Natural killer cell (primary cell): ENCODE measurements at regions of chr9 and their contacts with region 1.

Region 1: DNA sequence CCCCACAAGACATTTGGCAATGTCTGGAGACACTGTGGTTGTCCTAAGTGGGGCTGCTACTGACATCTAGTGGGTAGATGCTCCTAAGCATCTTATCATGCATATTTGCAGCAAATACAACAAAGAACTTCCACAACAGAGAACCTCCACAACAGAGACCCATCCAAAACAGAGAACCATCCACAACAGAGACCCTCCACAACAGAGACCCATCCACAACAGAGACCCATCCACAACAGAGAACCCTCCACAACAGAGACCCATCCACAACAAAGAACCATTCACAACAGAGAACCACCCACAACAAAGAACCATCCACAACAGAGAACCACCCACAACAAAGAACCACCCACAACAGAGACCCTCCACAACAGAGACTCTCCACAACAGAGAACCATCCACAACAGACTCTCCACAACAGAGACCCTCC is 32.8 kb downstream of the ARPC5L start:
- DNase-seq: peak in 1 of 2 donors; percentile 78
- ATAC-seq: peak; percentile 82 to 99 (median 96)
- H3K4me3 ChIP-seq: no peak overlapping the region
- H3K4me3 Mint-ChIP-seq: no peak overlapping the region
- H3K27ac ChIP-seq: no peak overlapping the region
- H3K27ac Mint-ChIP-seq: peak overlapping the region in 1 of 2 donors; percentile 74
- H3K4me1 ChIP-seq: peaks cover 4% of the 10 kb centered on the region
- H3K4me1 Mint-ChIP-seq: peaks cover 8 to 16% of the 10 kb centered on the region in 2 donors
- H3K27me3 ChIP-seq: no peaks in the 10 kb centered on the region
- H3K27me3 Mint-ChIP-seq: no peaks in the 10 kb centered on the region
- CTCF ChIP-seq: peak; percentile 65

Region 2: GRCh38 chr9:124291801-124292396 is 602.9 kb before region 1 on chr9:
- intact Hi-C with region 1: no loop called
- DNase-seq: peak in 1 of 2 donors; percentile 40
- ATAC-seq: peak; percentile 45 to 58 (median 57)
- H3K4me3 ChIP-seq: no peak overlapping the region
- H3K4me3 Mint-ChIP-seq: no peak overlapping the region
- H3K27ac ChIP-seq: no peak overlapping the region
- H3K27ac Mint-ChIP-seq: peak overlapping the region; percentile 34 to 70
- H3K4me1 ChIP-seq: peaks cover 83% of the 10 kb centered on the region
- H3K4me1 Mint-ChIP-seq: peaks cover 47 to 58% of the 10 kb centered on the region in 2 donors
- H3K27me3 ChIP-seq: no peaks in the 10 kb centered on the region
- H3K27me3 Mint-ChIP-seq: no peaks in the 10 kb centered on the region
- CTCF ChIP-seq: no peak

Region 3: GRCh38 chr9:124839612-124840299 is 55.0 kb before region 1 on chr9:
- intact Hi-C with region 1: loop called (anchors 10 kb)
- DNase-seq: no peak
- ATAC-seq: no peak
- H3K4me3 ChIP-seq: no peak overlapping the region
- H3K4me3 Mint-ChIP-seq: no peak overlapping the region
- H3K27ac ChIP-seq: no peak overlapping the region
- H3K27ac Mint-ChIP-seq: no peak overlapping the region
- H3K4me1 ChIP-seq: no peaks in the 10 kb centered on the region
- H3K4me1 Mint-ChIP-seq: no peaks in the 10 kb centered on the region
- H3K27me3 ChIP-seq: peaks cover 2% of the 10 kb centered on the region
- H3K27me3 Mint-ChIP-seq: peaks cover 8 to 12% of the 10 kb centered on the region in 2 donors
- CTCF ChIP-seq: peak; percentile 5

Region 4: DNA sequence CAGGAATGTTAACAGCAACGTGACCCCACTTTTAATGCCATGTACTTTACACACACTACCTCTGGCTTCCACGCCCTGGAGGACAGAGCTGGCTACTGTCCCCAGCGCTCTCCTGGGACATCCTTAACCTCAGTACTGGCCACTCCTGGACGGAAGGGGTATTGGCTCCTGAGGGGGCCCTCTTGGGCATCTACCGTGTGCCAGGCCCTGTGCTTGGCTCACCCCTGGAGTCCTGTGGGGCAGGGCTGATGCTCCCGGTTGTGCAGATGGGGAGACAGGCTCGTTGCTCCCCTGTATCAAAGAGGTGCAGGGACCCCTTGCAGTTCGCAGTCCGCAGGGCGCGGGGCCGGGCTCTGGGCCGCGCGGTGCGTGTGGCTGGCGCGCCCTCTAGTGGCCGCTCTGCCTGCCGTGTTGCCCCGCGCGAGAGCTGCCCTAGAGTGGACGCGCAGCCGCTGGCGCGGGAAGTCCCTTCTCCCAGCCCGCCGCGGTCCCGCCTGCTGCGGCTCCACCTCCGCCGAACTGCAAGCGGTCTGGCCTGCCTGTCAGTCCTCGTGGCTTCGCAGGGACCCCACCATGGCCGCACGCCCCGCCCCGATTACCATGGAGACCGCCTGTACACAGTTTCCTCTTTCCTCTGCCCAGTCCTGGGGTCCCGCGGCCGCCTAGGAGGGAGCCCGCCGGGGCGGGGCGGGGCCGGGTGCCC is 41.8 kb before region 1 on chr9 and contains the start of gene WDR38:
- intact Hi-C with region 1: loop called (anchors 1 kb)
- DNase-seq: peak; percentile 88 to 93
- ATAC-seq: peak; percentile 90 to 96 (median 95)
- H3K4me3 ChIP-seq: peak within 1 kb of the TSS; percentile 27
- H3K4me3 Mint-ChIP-seq: peak within 1 kb of the TSS; percentile 82
- H3K27ac ChIP-seq: peak within 1 kb of the TSS; percentile 87
- H3K27ac Mint-ChIP-seq: peak within 1 kb of the TSS; percentile 86 to 89
- H3K4me1 ChIP-seq: peaks cover 23% of the 10 kb centered on the region
- H3K4me1 Mint-ChIP-seq: peaks cover 13 to 24% of the 10 kb centered on the region in 2 donors
- H3K27me3 ChIP-seq: peaks cover 3% of the 10 kb centered on the region
- H3K27me3 Mint-ChIP-seq: no peaks in the 10 kb centered on the region
- CTCF ChIP-seq: peak; percentile 99
- total RNA-seq, gene WDR38: not detected

Region 5: DNA sequence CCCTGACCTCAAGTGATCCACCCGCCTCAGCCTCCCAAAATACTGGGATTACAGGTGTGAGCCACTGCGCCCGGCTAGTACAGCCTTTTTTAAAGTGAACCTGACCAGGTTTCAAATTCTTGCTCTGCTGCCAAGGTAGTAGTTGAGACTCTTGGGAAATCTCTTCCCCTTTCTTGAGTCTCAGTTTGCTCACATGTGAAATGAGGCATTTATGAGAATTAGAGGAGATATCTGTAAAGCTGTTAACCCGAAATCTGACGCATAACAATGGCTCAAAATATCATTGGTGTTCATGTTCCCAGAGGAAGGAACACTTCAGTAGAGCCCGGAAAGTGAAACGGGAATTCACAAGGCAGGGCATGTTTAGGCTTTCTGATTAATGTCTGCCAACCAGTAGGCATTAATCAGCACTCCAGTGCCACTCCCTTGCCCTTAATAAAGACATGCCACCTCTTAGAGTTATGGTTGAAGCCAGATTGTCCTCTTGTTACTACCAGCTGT is 31.3 kb before region 1 on chr9:
- intact Hi-C with region 1: no loop called
- DNase-seq: no peak
- ATAC-seq: no peak
- H3K4me3 ChIP-seq: no peak overlapping the region
- H3K4me3 Mint-ChIP-seq: peak overlapping the region; percentile 25
- H3K27ac ChIP-seq: no peak overlapping the region
- H3K27ac Mint-ChIP-seq: no peak overlapping the region
- H3K4me1 ChIP-seq: peaks cover 35% of the 10 kb centered on the region
- H3K4me1 Mint-ChIP-seq: peaks cover 30 to 38% of the 10 kb centered on the region in 2 donors
- H3K27me3 ChIP-seq: no peaks in the 10 kb centered on the region
- H3K27me3 Mint-ChIP-seq: no peaks in the 10 kb centered on the region
- CTCF ChIP-seq: no peak

Region 6: GRCh38 chr9:124960409-124960752 is 65.6 kb after region 1 on chr9:
- intact Hi-C with region 1: no loop called
- DNase-seq: no peak
- ATAC-seq: no peak
- H3K4me3 ChIP-seq: no peak overlapping the region
- H3K4me3 Mint-ChIP-seq: no peak overlapping the region
- H3K27ac ChIP-seq: no peak overlapping the region
- H3K27ac Mint-ChIP-seq: no peak overlapping the region
- H3K4me1 ChIP-seq: peaks cover 6% of the 10 kb centered on the region
- H3K4me1 Mint-ChIP-seq: peaks cover 8 to 16% of the 10 kb centered on the region in 2 donors
- H3K27me3 ChIP-seq: no peaks in the 10 kb centered on the region
- H3K27me3 Mint-ChIP-seq: no peaks in the 10 kb centered on the region
- CTCF ChIP-seq: no peak